PC-3 (cell line): ENCODE measurements at regions of chr19 and their contacts with region 1.

Region 1: GRCh38 chr19:39052243-39052746 is 19.9 kb upstream of the FBXO27 start:
- DNase-seq: peak; percentile 64
- ATAC-seq: peak; percentile 81
- H3K4me3 ChIP-seq: no peak overlapping the region
- H3K27ac ChIP-seq: no peak overlapping the region
- H3K4me1 ChIP-seq: no peaks in the 10 kb centered on the region
- H3K27me3 ChIP-seq: no peaks in the 10 kb centered on the region
- CTCF ChIP-seq: peak; percentile 78

Region 2: DNA sequence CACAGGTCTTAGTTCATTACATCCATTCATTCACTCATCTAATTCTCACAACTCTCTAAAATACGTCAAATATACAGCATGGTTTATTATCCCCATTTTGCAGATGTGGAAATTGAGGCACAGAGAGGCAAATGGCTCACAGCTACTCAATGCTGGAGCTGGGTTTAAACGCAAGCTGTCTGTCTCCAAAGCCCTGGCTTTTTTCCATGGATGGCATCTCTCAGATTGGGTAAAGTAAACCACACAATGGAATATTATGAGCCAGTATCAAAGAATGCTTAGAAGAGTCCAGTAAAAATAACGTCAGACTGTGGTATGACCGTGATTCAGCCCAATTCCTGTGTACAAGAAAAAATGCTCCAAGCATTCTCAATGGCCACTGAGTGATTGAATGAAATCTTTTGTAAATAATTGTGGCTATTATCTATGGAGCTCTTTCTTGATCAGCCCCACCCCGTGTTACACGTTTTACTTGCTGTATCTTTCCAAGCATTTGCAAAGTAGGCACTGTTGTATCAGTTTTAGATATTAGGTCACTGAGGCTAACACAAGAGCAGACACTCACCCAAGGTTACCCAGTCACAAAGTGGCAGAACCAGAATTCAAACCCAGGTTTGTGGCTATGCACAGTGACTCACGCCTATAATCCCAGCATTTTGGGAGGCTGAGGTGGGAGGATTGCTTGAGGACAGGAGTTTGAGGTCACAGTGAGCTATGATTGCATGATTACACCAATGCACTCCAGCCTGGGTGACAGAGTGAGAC is 26.3 kb after region 1 on chr19:
- CTCF ChIA-PET with region 1: no interaction called
- POLR2A ChIA-PET with region 1: no interaction called
- intact Hi-C with region 1: no loop called
- DNase-seq: peak; percentile 95
- ATAC-seq: peak; percentile 66
- H3K4me3 ChIP-seq: no peak overlapping the region
- H3K27ac ChIP-seq: peak overlapping the region; percentile 93
- H3K4me1 ChIP-seq: peaks cover 35% of the 10 kb centered on the region
- H3K27me3 ChIP-seq: no peaks in the 10 kb centered on the region
- CTCF ChIP-seq: no peak

Region 3: GRCh38 chr19:39098365-39099269 is 46.3 kb after region 1 on chr19:
- CTCF ChIA-PET with region 1: no interaction called
- POLR2A ChIA-PET with region 1: no interaction called
- intact Hi-C with region 1: no loop called
- DNase-seq: no peak
- ATAC-seq: no peak
- H3K4me3 ChIP-seq: no peak overlapping the region
- H3K27ac ChIP-seq: no peak overlapping the region
- H3K4me1 ChIP-seq: no peaks in the 10 kb centered on the region
- H3K27me3 ChIP-seq: no peaks in the 10 kb centered on the region
- CTCF ChIP-seq: no peak

Region 4: GRCh38 chr19:39110263-39110967 is 58.1 kb after region 1 on chr19:
- CTCF ChIA-PET with region 1: interaction called, 5 read pairs
- POLR2A ChIA-PET with region 1: no interaction called
- intact Hi-C with region 1: loop called (anchors 10 kb)
- DNase-seq: peak; percentile 61
- ATAC-seq: peak; percentile 33; the same call in 1 of the 2 replicates
- H3K4me3 ChIP-seq: no peak overlapping the region
- H3K27ac ChIP-seq: peak overlapping the region; percentile 97; the same call in 1 of the 2 replicates
- H3K4me1 ChIP-seq: peaks cover 11% of the 10 kb centered on the region
- H3K27me3 ChIP-seq: no peaks in the 10 kb centered on the region
- CTCF ChIP-seq: peak; percentile 74